ENCODE measurements at regions of chr4 and their contacts with region 1.

Region 1: GRCh38 chr4:128809477-128810330 is at the start of gene JADE1:
- DNase-seq: peak; percentile 92
- ATAC-seq: peak; percentile 72
- total RNA-seq, gene JADE1: 24.4 TPM

Region 2: DNA sequence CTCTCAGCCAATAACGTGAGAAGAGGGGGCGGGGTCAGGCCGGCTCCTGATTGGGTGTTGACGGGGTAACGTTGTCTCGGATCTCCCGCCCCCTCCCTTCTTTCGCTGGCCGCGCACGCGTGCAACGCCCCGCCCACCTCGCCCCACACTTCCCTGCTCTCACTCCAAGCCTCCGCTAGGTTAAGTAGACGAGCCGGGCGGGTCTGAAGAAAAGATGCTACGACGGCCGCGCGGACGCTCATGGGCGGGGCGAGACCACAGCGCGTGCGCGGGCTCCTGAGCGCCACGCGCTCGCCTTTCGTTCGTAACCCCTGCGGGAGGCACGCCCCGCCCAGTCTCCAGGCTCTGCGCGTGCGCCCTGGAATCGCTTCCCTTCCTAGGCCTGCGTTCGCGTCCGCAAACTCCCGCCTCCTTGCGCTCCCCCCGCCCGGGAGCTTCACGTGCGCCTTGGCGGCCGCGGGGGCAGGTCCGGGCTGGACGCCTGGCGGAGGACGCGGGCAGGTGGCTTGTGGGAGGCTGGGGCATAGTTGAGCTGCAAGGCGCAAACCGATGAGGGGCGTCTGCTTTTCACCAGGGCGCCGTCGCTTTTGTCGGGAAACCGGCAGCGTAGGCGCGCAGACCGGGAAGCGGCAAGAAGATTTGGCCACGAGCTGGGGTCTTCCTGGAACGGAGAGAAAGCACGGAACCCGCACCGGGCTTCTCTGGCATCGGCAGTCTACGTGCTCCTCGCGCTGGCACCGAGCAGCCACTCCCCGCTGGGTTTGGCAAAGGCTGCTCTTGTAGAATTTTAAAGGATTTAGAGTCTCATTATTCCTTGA is 521.6 kb before region 1 on chr4:
- intact Hi-C with region 1: loop called (anchors 5 kb)
- DNase-seq: peak; percentile 100
- ATAC-seq: peak; percentile 93

Region 3: GRCh38 chr4:129208481-129208880 is 398.8 kb after region 1 on chr4:
- intact Hi-C with region 1: no loop called
- DNase-seq: no peak
- ATAC-seq: no peak